ENCODE measurements at regions of chr22 and their contacts with region 1.

Region 1: DNA sequence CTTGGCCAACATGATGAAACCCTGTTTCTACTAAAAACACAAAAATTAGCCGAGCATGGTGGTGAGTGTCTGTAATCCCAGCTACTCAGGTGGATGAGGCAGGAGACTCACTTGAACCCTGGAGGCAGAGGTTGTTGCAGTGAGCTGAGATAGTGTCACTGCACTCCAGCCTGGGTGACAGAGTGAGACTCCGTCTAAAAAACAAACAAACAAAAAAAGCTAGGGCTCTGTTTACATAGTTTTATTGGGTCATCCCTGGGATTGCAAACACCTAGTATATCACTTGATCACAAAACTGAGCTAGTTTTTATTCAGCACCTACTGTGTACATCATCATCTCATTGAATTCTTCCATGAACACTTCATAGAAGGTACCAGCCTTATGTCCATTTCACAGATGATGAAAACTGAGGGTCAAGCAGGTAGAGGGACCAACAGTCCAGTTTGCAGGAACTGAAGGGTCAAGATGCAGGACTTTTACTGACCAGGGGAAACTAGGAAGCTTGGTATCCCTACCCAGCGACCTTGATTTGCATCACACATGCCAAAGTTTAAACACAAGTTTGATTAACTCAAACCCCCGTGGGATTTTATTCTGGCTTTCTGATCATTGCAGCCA is 9.2 kb upstream of the MRTFA start:
- DNase-seq: no peak
- H3K4me3 ChIP-seq: no peak overlapping the region
- H3K27ac ChIP-seq: peak overlapping the region; percentile 45 to 79 (median 66)
- H3K4me1 ChIP-seq: peaks cover 0 to 32% (median 21%) of the 10 kb centered on the region in 4 donors
- H3K27me3 ChIP-seq: no peaks in the 10 kb centered on the region
- CTCF ChIP-seq: no peak
- EP300 ChIP-seq: no peak
- POLR2A ChIP-seq: no peak

Region 2: DNA sequence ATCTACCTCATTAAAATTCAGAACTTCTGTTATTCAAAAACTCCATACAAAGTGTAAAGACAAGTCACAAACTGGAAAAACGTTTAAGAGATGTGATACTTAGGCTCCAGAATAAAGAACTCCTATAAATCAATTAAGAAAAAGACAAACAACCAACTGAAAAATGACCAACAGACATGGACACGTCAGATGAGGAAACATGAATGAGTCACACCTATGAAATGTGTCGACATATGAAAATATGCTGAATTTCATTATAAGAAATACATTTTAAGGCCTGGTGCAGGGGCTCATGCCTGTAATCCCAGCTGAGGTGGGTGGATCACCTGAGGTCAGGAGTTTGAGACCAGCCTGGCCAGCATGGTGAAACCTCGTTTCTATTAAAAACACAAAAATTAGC is 830.8 kb before region 1 on chr22:
- in situ Hi-C with region 1: no loop called
- intact Hi-C with region 1: no loop called
- DNase-seq: no peak
- H3K4me3 ChIP-seq: no peak overlapping the region
- H3K27ac ChIP-seq: no peak overlapping the region
- H3K4me1 ChIP-seq: no peaks in the 10 kb centered on the region
- H3K27me3 ChIP-seq: peaks cover 13% of the 10 kb centered on the region
- CTCF ChIP-seq: no peak
- EP300 ChIP-seq: no peak
- POLR2A ChIP-seq: no peak

Region 3: DNA sequence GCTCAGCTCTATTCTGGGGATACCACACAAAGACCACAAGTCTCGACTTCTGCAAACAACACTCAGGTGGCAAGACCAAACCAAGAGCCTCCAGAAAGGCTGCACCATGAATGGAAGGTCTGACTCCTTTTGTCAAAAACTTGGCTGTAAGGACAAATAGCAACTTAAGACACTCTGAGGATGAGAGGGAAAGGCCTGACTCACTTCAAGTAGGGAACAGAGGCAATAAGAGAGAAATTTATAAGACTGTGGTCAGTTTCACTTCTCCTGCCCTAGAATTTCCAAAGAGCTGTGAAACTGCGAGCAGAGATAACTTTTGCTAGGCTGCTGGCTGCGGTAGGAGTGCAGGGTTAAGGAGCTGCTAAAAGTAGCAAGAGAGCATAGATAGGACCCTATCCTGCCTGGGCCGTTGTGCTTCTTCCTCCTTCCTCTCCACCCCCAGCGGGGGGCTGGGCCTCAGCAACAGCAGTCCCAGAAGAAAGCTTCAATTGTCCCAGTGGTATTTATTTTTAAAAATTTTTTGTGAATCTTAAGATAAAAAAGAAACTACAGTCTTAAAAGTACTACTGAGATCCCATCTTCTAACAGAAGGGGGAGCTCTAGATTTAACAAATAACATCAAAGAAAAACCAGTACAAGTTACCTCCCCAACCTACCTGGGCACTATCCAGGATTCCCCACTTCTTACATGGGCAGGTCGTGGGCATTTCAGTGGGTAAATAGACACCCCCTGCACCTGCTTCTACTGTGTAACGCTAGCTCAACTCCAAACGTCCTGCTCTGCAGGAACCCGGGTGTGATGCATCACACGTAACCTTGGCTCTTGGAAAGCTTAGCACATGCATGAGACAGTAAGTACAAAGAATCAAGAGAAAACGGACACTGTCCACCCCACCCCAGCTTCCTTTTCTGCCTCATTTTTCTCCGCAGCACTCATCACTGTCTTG is 208.9 kb before region 1 on chr22:
- in situ Hi-C with region 1: loop called (anchors 5 to 10 kb)
- intact Hi-C with region 1: loop called (anchors 2 kb)
- DNase-seq: peak; percentile 31
- H3K4me3 ChIP-seq: peak overlapping the region in 1 of 4 donors; percentile 30
- H3K27ac ChIP-seq: peak overlapping the region; percentile 50 to 78 (median 68)
- H3K4me1 ChIP-seq: peaks cover 0 to 51% (median 15%) of the 10 kb centered on the region in 4 donors
- H3K27me3 ChIP-seq: no peaks in the 10 kb centered on the region
- CTCF ChIP-seq: peak; percentile 62 to 78 (median 72)
- EP300 ChIP-seq: no peak
- POLR2A ChIP-seq: no peak

Region 4: DNA sequence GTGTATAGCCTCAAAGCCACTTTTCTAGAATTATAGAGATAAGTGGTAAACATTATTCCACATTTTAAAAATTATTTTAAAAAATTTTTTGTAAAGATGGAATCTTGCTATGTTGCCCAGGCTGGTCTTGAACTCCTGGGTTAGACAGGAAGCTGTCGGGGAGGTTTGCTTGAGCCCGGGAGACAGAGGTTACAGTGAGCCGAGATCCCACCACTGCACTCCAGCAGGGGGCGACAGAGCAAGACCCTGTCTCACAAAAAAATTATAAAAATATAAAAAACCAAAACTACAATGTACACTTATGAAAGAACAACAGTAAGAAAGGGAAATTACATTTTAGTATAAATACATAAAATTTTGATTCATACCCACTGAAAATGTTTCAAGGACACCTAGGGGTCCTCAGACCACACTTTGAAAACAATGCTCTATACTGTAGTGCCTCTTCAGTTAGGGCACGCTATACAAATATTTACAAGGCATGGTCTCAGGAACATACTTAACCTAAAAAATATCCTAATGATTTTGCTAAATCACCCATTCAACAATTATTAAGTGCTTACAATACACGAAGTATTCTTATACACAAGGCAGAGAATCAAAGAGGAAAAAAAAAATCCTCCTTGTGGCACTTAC is 120.3 kb before region 1 on chr22:
- in situ Hi-C with region 1: loop called in 2 of 4 experiments (anchors 5 to 25 kb)
- intact Hi-C with region 1: no loop called
- DNase-seq: peak; percentile 51
- H3K4me3 ChIP-seq: no peak overlapping the region
- H3K27ac ChIP-seq: peak overlapping the region in 1 of 4 donors; percentile 35
- H3K4me1 ChIP-seq: peaks cover 0 to 26% (median 8%) of the 10 kb centered on the region in 4 donors
- H3K27me3 ChIP-seq: no peaks in the 10 kb centered on the region
- CTCF ChIP-seq: peak; percentile 64 to 77 (median 70)
- EP300 ChIP-seq: no peak
- POLR2A ChIP-seq: no peak